MCF 10A (cell line): ENCODE measurements at regions of chr3 and their contacts with region 1.

Region 1: GRCh38 chr3:65245133-65246063 is 557.6 kb upstream of the ADAMTS9 start:
- DNase-seq: peak; percentile 14
- H3K4me3 Mint-ChIP-seq: no peak overlapping the region
- H3K27ac Mint-ChIP-seq: no peak overlapping the region
- H3K4me1 Mint-ChIP-seq: no peaks in the 10 kb centered on the region
- H3K27me3 Mint-ChIP-seq: no peaks in the 10 kb centered on the region
- CTCF ChIP-seq: peak; percentile 53

Region 2: GRCh38 chr3:64685800-64686445 is 559.5 kb before region 1 on chr3:
- CTCF ChIA-PET with region 1: interaction called, 5 read pairs
- POLR2A ChIA-PET with region 1: no interaction called
- intact Hi-C with region 1: loop called (anchors 1 kb)
- DNase-seq: peak; percentile 91
- H3K4me3 Mint-ChIP-seq: peak overlapping the region; percentile 81
- H3K27ac Mint-ChIP-seq: peak overlapping the region; percentile 83
- H3K4me1 Mint-ChIP-seq: peaks cover 16% of the 10 kb centered on the region
- H3K27me3 Mint-ChIP-seq: no peaks in the 10 kb centered on the region
- CTCF ChIP-seq: peak; percentile 38

Region 3: DNA sequence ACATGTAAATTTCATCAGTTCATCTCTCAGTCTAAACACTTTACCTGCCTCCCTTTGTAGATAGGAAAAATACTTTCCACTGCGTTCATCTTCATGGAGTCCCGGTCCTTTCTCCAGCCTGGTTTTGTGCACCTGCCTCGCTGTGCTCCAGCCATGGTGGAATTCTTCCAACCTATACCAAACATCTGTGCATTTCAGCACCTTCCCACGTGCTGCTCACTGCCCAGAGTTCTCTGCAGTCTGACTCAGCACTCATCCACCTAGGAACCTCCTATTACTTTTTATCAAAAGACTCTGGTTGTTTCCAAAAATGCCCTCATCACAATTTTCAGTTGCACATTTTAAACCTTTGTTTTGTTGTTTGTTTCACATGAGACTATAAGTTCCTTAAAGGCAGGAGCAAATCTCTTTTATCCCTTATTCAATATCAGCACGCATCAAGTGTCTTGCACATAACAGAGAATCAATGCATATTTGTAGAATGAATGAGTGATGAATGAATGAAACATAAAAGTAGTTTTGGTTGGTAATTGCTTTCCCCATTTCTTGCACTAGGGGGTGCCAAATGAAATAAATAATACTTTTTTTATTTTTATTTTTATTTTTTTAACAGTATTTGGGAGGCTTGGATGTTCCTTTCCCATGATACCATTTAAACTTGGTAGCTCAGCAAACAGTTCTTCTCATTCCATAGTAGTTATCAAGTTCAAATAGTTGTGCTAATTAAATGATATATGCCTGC is 527.4 kb before region 1 on chr3:
- CTCF ChIA-PET with region 1: interaction called, 4 read pairs
- POLR2A ChIA-PET with region 1: no interaction called
- intact Hi-C with region 1: loop called (anchors 1 kb)
- DNase-seq: peak; percentile 5
- H3K4me3 Mint-ChIP-seq: no peak overlapping the region
- H3K27ac Mint-ChIP-seq: no peak overlapping the region
- H3K4me1 Mint-ChIP-seq: no peaks in the 10 kb centered on the region
- H3K27me3 Mint-ChIP-seq: no peaks in the 10 kb centered on the region
- CTCF ChIP-seq: peak; percentile 69

Region 4: GRCh38 chr3:64763980-64764379 is 481.4 kb before region 1 on chr3:
- CTCF ChIA-PET with region 1: no interaction called
- POLR2A ChIA-PET with region 1: no interaction called
- intact Hi-C with region 1: loop called (anchors 2 kb)
- DNase-seq: peak; percentile 32
- H3K4me3 Mint-ChIP-seq: no peak overlapping the region
- H3K27ac Mint-ChIP-seq: no peak overlapping the region
- H3K4me1 Mint-ChIP-seq: no peaks in the 10 kb centered on the region
- H3K27me3 Mint-ChIP-seq: no peaks in the 10 kb centered on the region
- CTCF ChIP-seq: no peak

Region 5: GRCh38 chr3:65230256-65231139 is 14.9 kb before region 1 on chr3:
- CTCF ChIA-PET with region 1: interaction called, 10 read pairs
- POLR2A ChIA-PET with region 1: interaction called, 3 read pairs
- intact Hi-C with region 1: no loop called
- DNase-seq: peak; percentile 43
- H3K4me3 Mint-ChIP-seq: no peak overlapping the region
- H3K27ac Mint-ChIP-seq: no peak overlapping the region
- H3K4me1 Mint-ChIP-seq: peaks cover 24% of the 10 kb centered on the region
- H3K27me3 Mint-ChIP-seq: no peaks in the 10 kb centered on the region
- CTCF ChIP-seq: no peak